ENCODE measurements at regions of chr17 and their contacts with region 1.

Region 1: GRCh38 chr17:74790161-74791054 is 14.3 kb upstream of the NAT9 start:
- DNase-seq: no peak
- H3K4me3 ChIP-seq: no peak overlapping the region
- H3K27ac ChIP-seq: no peak overlapping the region
- H3K27me3 ChIP-seq: no peaks in the 10 kb centered on the region
- CTCF ChIP-seq: no peak

Region 2: GRCh38 chr17:74744714-74745547 is 45.5 kb before region 1 on chr17:
- CTCF ChIA-PET with region 1: interaction called, 38 read pairs
- POLR2A ChIA-PET with region 1: no interaction called
- DNase-seq: no peak
- H3K4me3 ChIP-seq: 0 out of 2 replicates have a peak overlapping the region, but pooled peaks have one; percentile 3
- H3K27ac ChIP-seq: no peak overlapping the region
- H3K27me3 ChIP-seq: peaks cover 7% of the 10 kb centered on the region
- CTCF ChIP-seq: peak; percentile 99

Region 3: DNA sequence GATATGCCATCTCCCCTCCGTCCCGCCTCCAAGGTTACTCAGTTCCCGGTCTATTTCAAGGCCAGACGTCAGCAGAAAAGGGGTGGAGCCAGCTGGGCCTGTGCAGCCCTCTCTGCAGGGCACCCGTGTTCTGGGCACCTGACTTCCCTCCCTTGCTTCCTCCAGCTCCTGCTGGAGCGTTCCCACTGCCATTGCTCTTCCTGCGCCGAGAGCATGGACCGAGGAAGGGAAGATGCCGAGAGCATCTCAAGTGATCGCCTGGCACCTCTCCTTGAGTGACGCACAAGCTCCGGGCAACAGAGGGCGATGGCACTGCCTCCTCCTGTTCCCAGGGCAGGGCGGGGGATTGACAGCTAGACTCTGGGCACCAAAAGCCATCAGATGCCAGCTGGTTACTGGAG is 15.2 kb after region 1 on chr17:
- CTCF ChIA-PET with region 1: interaction called, 19 read pairs
- POLR2A ChIA-PET with region 1: no interaction called
- DNase-seq: no peak
- H3K4me3 ChIP-seq: no peak overlapping the region
- H3K27ac ChIP-seq: no peak overlapping the region
- H3K27me3 ChIP-seq: no peaks in the 10 kb centered on the region
- CTCF ChIP-seq: no peak

Region 4: DNA sequence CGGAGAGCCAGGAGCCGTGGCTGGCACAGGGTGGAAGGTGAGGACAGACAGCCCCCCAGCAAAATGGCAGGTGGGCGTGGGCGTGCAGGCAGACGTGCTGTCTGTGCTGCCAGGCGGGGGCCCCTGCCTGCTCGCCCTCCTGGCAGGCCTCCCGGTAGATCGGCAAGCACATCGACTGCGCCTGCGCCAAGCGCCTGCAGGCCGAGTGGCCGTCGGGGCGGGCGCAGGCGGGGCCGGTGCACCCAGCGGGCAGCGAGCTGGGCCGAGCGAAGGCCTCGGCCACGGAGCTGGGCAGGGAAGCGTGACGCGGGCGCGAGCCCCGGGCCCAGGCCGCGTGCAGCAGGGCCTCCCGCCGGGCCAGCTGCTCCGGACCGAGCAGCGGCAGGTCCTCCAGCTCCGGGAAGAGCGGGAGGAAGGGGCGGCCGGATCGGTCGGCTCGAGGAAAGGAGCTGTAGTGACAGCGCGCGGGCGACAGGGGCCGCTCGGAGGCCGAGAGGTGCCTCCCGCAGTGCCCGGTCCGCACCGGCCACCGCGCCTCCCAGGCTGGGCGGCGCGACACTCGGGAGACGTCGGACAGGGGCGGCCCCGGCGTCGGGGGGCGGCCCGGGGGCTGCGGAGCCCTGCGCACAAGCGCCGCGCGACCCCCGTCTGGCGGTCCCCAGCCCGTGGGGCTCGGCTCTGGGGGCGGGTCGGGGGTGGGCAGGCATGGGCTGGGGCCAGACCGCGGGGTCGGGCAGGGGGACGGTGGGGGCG is 52.4 kb after region 1 on chr17:
- CTCF ChIA-PET with region 1: interaction called, 21 read pairs
- POLR2A ChIA-PET with region 1: no interaction called
- DNase-seq: no peak
- H3K4me3 ChIP-seq: peak overlapping the region; percentile 42; the same call in 1 of the 2 replicates
- H3K27ac ChIP-seq: no peak overlapping the region
- H3K27me3 ChIP-seq: peaks cover 5% of the 10 kb centered on the region
- CTCF ChIP-seq: peak; percentile 37; the same call in 1 of the 2 replicates

Region 5: DNA sequence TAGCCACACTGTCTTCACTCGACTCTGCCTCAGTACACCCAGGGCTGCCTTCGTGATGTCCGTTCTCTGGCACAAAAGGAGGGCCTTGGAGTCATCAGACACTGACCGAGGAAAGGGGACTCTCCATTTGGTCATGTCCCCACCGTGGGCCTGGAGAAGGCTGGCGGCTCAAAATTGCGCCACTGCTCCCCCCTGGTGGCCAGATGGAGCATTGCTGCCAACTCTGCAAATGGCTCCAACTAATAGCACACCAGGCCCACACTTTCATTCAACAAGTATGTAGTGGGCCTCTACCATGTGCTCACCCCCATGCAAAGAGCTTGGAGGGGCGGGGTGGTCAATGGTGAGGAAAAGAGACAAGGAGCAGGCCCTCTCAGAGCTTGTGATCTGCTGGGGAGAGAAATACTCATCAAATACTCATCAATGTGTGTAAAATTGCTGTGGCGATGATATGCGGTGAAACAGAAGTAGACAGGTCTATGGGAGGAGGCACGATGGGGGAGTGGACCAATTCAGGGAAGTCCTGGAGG is 74.5 kb after region 1 on chr17:
- CTCF ChIA-PET with region 1: interaction called, 198 read pairs
- POLR2A ChIA-PET with region 1: no interaction called
- DNase-seq: no peak
- H3K4me3 ChIP-seq: no peak overlapping the region
- H3K27ac ChIP-seq: no peak overlapping the region
- H3K27me3 ChIP-seq: peaks cover 17% of the 10 kb centered on the region
- CTCF ChIP-seq: peak; percentile 94

Region 6: GRCh38 chr17:74898376-74898946 is 108.1 kb after region 1 on chr17:
- CTCF ChIA-PET with region 1: no interaction called
- POLR2A ChIA-PET with region 1: no interaction called
- DNase-seq: no peak
- H3K4me3 ChIP-seq: no peak overlapping the region
- H3K27ac ChIP-seq: no peak overlapping the region
- H3K27me3 ChIP-seq: peaks cover 60% of the 10 kb centered on the region
- CTCF ChIP-seq: no peak

Measured in AG04450 (cell line).